ENCODE measurements at regions of chr7 and their contacts with region 1.

Region 1: GRCh38 chr7:2863461-2864066 is 19.5 kb upstream of the GNA12 start:
- DNase-seq: peak; percentile 89
- ATAC-seq: peak; percentile 97
- H3K4me3 ChIP-seq: peak overlapping the region; percentile 58 to 74 (median 60)
- H3K27ac ChIP-seq: peak overlapping the region; percentile 94
- H3K4me1 ChIP-seq: peaks cover 47% of the 10 kb centered on the region
- H3K27me3 ChIP-seq: no peaks in the 10 kb centered on the region
- CTCF ChIP-seq: 0 out of 2 replicates have a peak, but pooled peaks have one; percentile 30
- EP300 ChIP-seq: peak in 1 of 2 experiments; percentile 32; a peak in 1 of 4 replicates
- POLR2A ChIP-seq: peak; percentile 95 to 97
- RAD21 ChIP-seq: peak; percentile 22; the same call in 1 of the 2 replicates

Region 2: DNA sequence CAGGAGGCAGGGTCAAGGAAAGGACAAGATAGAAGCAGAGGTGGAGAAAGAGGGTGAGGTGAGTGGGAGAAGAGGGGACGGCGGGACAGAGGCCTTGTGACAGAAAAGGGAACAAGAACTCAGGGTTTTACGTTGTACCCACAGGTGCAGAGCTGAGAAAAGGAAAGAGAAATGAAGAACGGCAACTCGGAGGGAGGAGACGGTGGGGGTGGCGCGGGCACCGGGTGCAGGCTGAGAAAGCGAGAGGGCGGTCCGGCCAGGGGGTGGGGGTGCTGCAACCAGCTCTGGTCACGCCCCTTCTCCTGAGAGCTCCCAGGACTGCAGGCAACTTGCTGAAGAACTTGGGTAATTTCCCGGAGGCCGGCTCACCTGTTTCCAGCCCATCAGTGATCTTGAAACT is 114.8 kb after region 1 on chr7:
- CTCF ChIA-PET with region 1: no interaction called
- POLR2A ChIA-PET with region 1: no interaction called
- in situ Hi-C with region 1: no loop called
- intact Hi-C with region 1: no loop called
- DNase-seq: no peak
- ATAC-seq: no peak
- H3K4me3 ChIP-seq: no peak overlapping the region
- H3K27ac ChIP-seq: no peak overlapping the region
- H3K4me1 ChIP-seq: peaks cover 5% of the 10 kb centered on the region; the same call in 1 of the 2 replicates
- H3K27me3 ChIP-seq: peaks cover 4 to 33% of the 10 kb centered on the region in 2 experiments; a peak in 2 of 5 replicates
- CTCF ChIP-seq: no peak
- EP300 ChIP-seq: no peak
- POLR2A ChIP-seq: no peak
- RAD21 ChIP-seq: no peak

Region 3: DNA sequence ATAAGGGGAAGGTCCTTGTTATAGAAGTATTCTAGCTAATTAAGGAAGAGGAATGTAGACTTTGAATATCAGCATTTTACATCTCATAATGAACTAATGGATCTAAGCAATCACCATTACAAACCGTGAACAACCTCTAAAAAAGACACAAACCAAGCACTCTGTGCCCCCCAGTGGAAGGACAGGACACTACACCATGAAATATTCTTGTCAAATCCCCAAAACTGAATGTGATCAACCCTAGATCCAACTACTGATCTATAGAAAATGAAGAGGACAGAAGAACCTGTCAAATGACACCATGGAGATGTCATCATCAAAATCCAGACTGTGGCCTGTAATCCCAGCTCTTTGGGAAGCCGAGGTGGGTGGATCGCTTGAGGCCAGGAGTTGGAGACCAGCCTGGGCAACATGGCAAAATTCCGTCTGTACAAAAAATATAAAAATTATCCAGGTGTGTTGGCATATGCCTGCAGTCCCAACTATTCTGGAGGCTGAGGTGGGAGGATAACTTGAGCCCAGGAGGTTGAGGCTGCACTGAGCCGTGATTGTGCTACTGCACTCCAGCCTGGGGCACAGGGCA is 291.4 kb after region 1 on chr7:
- CTCF ChIA-PET with region 1: interaction called, 16 read pairs
- POLR2A ChIA-PET with region 1: no interaction called
- in situ Hi-C with region 1: no loop called
- intact Hi-C with region 1: no loop called
- DNase-seq: peak; percentile 43
- ATAC-seq: peak; percentile 58; the same call in 2 of the 3 replicates
- H3K4me3 ChIP-seq: no peak overlapping the region
- H3K27ac ChIP-seq: no peak overlapping the region
- H3K4me1 ChIP-seq: no peaks in the 10 kb centered on the region
- H3K27me3 ChIP-seq: peaks cover 2 to 3% of the 10 kb centered on the region in 2 experiments; a peak in 1 of 5 replicates
- CTCF ChIP-seq: peak; percentile 74
- EP300 ChIP-seq: no peak
- POLR2A ChIP-seq: no peak
- RAD21 ChIP-seq: no peak; the same call in 1 of the 2 replicates

Region 4: GRCh38 chr7:3399858-3400257 is 536.3 kb after region 1 on chr7:
- CTCF ChIA-PET with region 1: interaction called, 4 read pairs
- POLR2A ChIA-PET with region 1: no interaction called
- in situ Hi-C with region 1: no loop called
- intact Hi-C with region 1: loop called (anchors 5 kb)
- DNase-seq: peak; percentile 73
- ATAC-seq: peak; percentile 99
- H3K4me3 ChIP-seq: no peak overlapping the region
- H3K27ac ChIP-seq: no peak overlapping the region
- H3K4me1 ChIP-seq: peaks cover 9% of the 10 kb centered on the region; the same call in 1 of the 2 replicates
- H3K27me3 ChIP-seq: no peaks in the 10 kb centered on the region
- CTCF ChIP-seq: peak; percentile 64
- EP300 ChIP-seq: no peak
- POLR2A ChIP-seq: no peak
- RAD21 ChIP-seq: no peak

Region 5: GRCh38 chr7:3897438-3898385 is 1034.1 kb after region 1 on chr7:
- CTCF ChIA-PET with region 1: interaction called, 5 read pairs
- POLR2A ChIA-PET with region 1: no interaction called
- in situ Hi-C with region 1: no loop called
- intact Hi-C with region 1: loop called (anchors 10 kb)
- DNase-seq: peak; percentile 29
- ATAC-seq: peak; percentile 62; the same call in 2 of the 3 replicates
- H3K4me3 ChIP-seq: no peak overlapping the region
- H3K27ac ChIP-seq: no peak overlapping the region
- H3K4me1 ChIP-seq: no peaks in the 10 kb centered on the region
- H3K27me3 ChIP-seq: no peaks in the 10 kb centered on the region
- CTCF ChIP-seq: peak; percentile 68
- EP300 ChIP-seq: no peak
- POLR2A ChIP-seq: no peak
- RAD21 ChIP-seq: no peak